Activated B cell treated with CpG ODN at 0.5 μM for 24 hours (primary cell): ENCODE measurements at regions of chr21 and their contacts with region 1.

Region 1: DNA sequence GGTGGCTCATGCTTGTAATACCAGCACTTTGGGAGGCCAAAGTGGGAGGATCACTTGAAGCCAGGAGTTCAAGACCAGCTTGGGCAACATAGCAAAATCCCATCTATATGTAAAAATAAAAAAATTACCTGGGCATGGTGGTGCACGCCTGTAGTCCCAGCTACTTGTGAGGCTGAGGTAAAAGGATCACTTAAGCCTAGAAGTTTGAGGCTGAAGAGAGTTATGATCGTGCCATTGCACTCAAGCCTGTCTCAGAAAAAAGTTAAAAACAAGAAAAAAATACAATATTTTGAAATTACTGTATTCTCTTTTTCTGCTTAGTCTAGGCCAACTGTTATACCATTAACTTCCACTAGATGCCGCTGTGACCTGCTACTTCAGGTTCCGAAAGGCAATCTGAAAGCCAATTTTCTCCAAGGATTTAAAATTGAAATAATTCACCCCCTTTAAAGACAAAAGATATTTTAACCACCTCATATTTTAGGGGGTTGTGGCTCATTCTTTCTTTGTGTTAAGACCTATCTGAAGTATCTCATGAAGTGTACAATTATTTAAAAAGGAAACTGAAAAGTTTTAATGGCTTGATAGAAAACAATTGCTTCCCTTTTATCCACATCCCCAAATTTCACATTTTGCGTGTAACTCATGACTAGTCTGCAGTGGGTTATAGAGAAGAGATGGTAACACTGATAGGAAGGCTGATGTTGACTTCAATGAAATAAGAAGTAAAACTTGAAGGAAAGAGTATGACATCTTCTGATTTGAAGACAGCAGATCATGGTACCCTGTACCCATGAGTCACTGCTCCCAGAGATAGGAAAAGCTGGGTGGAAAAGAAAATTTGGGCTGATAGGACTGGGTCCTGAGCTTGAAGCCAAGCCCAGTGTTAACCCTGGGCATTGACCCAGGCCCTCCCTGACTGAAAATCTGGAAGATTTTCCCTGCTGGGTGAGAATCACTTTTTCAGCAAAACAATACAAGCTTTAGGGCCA is 24.4 kb upstream of the CLDN14 start:
- DNase-seq: no peak
- ATAC-seq: no peak
- H3K4me3 Mint-ChIP-seq: no peak overlapping the region
- H3K27ac Mint-ChIP-seq: no peak overlapping the region
- H3K4me1 Mint-ChIP-seq: peaks cover 10% of the 10 kb centered on the region
- H3K27me3 Mint-ChIP-seq: peaks cover 2% of the 10 kb centered on the region
- CTCF ChIP-seq: peak; percentile 93

Region 2: DNA sequence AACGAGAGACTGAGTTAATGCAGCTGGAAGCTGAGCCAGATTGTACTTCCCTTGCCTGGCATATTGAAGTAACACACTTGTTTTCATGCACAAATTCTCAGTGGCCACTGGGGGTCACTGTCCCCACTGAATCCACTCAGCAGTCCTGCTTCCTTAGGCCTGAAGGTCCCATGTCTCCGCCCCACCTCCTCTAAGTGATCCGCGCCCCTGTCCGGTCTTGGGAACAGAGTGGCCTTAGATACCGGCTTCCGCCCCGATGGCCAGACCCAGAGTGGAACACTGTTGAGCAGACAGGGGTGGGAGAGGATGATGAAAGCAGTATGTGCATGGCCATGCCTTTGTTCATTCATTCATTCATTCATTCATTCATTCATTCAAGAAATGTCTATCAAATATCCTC is 84.4 kb before region 1 on chr21:
- CTCF ChIA-PET with region 1: interaction called, 3 read pairs
- POLR2A ChIA-PET with region 1: no interaction called
- intact Hi-C with region 1: loop called (anchors 5 kb)
- DNase-seq: peak; percentile 29
- ATAC-seq: peak; percentile 71
- H3K4me3 Mint-ChIP-seq: no peak overlapping the region
- H3K27ac Mint-ChIP-seq: no peak overlapping the region
- H3K4me1 Mint-ChIP-seq: no peaks in the 10 kb centered on the region
- H3K27me3 Mint-ChIP-seq: no peaks in the 10 kb centered on the region
- CTCF ChIP-seq: no peak

Region 3: DNA sequence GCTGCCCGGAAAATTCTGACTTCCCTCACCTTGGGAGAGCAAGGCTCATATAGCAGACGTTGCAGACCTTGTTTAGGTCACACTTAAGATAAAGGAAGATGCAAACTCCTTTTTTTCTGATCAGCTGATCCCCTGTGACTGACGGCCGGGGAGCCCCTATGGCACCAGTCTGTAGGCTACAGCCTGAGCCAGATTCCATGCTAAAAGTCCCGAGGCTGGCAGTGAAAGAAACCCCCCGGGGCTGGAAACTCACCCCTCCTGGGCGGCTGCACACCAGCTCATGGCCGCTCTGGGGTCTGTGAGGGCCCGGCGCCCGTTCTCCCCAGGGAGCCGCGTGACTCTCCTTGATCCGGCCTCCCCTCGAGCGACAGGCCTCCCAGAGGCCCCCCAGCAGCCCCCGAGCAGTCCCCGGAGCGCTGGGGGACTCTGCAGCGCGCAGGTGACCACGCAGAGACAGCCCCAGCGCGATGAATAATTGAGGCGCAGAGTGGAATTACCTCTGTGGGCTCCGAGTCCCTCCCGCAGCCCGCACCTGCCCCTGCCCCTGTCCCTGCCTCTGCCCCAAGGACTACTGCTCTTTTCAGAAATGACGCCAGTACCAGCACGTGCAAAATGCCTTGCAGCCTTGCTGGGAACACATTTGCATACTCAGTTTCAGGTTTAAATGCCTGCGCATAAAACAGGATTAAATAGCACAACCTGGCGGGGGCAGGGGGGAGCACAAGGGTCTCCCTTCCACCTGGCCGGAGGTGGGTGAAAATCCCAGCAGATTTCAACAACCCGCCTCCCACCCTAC is 38.1 kb after region 1 on chr21:
- CTCF ChIA-PET with region 1: interaction called, 3 read pairs
- POLR2A ChIA-PET with region 1: no interaction called
- intact Hi-C with region 1: loop called (anchors 1 kb)
- DNase-seq: no peak
- ATAC-seq: peak; percentile 87
- H3K4me3 Mint-ChIP-seq: peak overlapping the region; percentile 41
- H3K27ac Mint-ChIP-seq: no peak overlapping the region
- H3K4me1 Mint-ChIP-seq: peaks cover 3% of the 10 kb centered on the region
- H3K27me3 Mint-ChIP-seq: peaks cover 11% of the 10 kb centered on the region
- CTCF ChIP-seq: no peak

Region 4: GRCh38 chr21:36589355-36589971 is 85.1 kb after region 1 on chr21:
- CTCF ChIA-PET with region 1: interaction called, 3 read pairs
- POLR2A ChIA-PET with region 1: no interaction called
- intact Hi-C with region 1: loop called (anchors 1 kb)
- DNase-seq: no peak
- ATAC-seq: peak; percentile 45
- H3K4me3 Mint-ChIP-seq: no peak overlapping the region
- H3K27ac Mint-ChIP-seq: no peak overlapping the region
- H3K4me1 Mint-ChIP-seq: no peaks in the 10 kb centered on the region
- H3K27me3 Mint-ChIP-seq: peaks cover 10% of the 10 kb centered on the region
- CTCF ChIP-seq: no peak

Region 5: GRCh38 chr21:36854391-36854790 is 350.0 kb after region 1 on chr21:
- CTCF ChIA-PET with region 1: no interaction called
- POLR2A ChIA-PET with region 1: no interaction called
- intact Hi-C with region 1: loop called (anchors 10 kb)
- DNase-seq: no peak
- ATAC-seq: no peak
- H3K4me3 Mint-ChIP-seq: no peak overlapping the region
- H3K27ac Mint-ChIP-seq: no peak overlapping the region
- H3K4me1 Mint-ChIP-seq: peaks cover 1% of the 10 kb centered on the region
- H3K27me3 Mint-ChIP-seq: no peaks in the 10 kb centered on the region
- CTCF ChIP-seq: no peak

Region 6: GRCh38 chr21:36927719-36928117 is 423.4 kb after region 1 on chr21:
- CTCF ChIA-PET with region 1: interaction called, 7 read pairs
- POLR2A ChIA-PET with region 1: no interaction called
- intact Hi-C with region 1: loop called (anchors 1 kb)
- DNase-seq: peak; percentile 46
- ATAC-seq: peak; percentile 64
- H3K4me3 Mint-ChIP-seq: no peak overlapping the region
- H3K27ac Mint-ChIP-seq: no peak overlapping the region
- H3K4me1 Mint-ChIP-seq: no peaks in the 10 kb centered on the region
- H3K27me3 Mint-ChIP-seq: no peaks in the 10 kb centered on the region
- CTCF ChIP-seq: peak; percentile 44

Region 7: GRCh38 chr21:36989699-36990507 is 485.5 kb after region 1 on chr21:
- CTCF ChIA-PET with region 1: no interaction called
- POLR2A ChIA-PET with region 1: no interaction called
- intact Hi-C with region 1: loop called (anchors 5 kb)
- DNase-seq: peak; percentile 91
- ATAC-seq: peak; percentile 92
- H3K4me3 Mint-ChIP-seq: peak overlapping the region; percentile 83
- H3K27ac Mint-ChIP-seq: peak overlapping the region; percentile 80
- H3K4me1 Mint-ChIP-seq: peaks cover 10% of the 10 kb centered on the region
- H3K27me3 Mint-ChIP-seq: no peaks in the 10 kb centered on the region
- CTCF ChIP-seq: peak; percentile 27